ENCODE measurements at regions of chr4 and their contacts with region 1.

Region 1: DNA sequence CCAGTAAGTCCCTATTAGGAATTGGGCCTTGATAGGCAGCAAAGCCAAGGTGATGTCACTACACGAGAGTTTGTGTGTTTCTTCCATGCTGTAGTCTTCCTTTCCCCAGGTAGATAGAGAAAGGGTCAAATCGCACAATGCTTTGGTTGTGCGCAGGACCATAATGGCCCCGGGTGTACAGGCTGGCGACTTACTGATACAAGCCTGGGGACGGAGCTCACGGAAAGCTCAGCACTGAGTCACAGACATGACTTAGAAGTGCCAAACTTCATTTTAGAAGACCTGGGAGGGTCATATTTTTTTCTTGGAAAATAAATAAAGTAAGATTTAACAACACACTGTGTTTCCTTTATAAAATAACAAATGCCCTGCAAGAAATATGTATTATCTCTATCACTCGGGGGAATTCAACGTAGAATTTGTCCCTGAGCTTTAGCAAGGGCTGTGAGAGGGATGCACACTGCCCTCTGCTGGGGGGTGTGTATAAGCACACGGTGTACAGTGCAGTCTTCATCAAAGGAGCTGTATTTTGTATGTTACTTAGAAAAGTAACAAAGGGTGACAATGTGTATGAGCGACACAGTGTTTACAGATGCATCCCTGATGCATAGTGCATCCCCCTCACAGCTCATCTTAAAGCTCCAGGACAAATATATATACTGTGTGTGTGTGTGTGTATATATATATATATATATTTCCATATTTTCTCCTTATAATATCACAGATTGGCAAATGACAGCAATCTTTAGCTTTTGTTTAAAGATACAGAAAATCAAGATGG is 254.5 kb upstream of the VEGFC start:
- DNase-seq: peak; percentile 53
- ATAC-seq: peak; percentile 97
- H3K4me3 ChIP-seq: no peak overlapping the region
- H3K27ac ChIP-seq: peak overlapping the region; percentile 51; the same call in 1 of the 2 replicates
- H3K4me1 ChIP-seq: no peaks in the 10 kb centered on the region
- H3K27me3 ChIP-seq: no peaks in the 10 kb centered on the region
- CTCF ChIP-seq: peak; percentile 74

Region 2: GRCh38 chr4:176563591-176563990 is 483.7 kb before region 1 on chr4:
- CTCF ChIA-PET with region 1: interaction called, 5 read pairs
- POLR2A ChIA-PET with region 1: no interaction called
- in situ Hi-C with region 1: no loop called
- intact Hi-C with region 1: loop called (anchors 10 kb)
- DNase-seq: no peak
- ATAC-seq: no peak
- H3K4me3 ChIP-seq: no peak overlapping the region
- H3K27ac ChIP-seq: no peak overlapping the region
- H3K4me1 ChIP-seq: no peaks in the 10 kb centered on the region
- H3K27me3 ChIP-seq: no peaks in the 10 kb centered on the region
- CTCF ChIP-seq: peak; percentile 49; the same call in 1 of the 2 replicates

Region 3: GRCh38 chr4:176902710-176903323 is 144.4 kb before region 1 on chr4:
- CTCF ChIA-PET with region 1: no interaction called
- POLR2A ChIA-PET with region 1: no interaction called
- in situ Hi-C with region 1: no loop called
- intact Hi-C with region 1: loop called (anchors 10 kb)
- DNase-seq: peak; percentile 64
- ATAC-seq: peak; percentile 44; the same call in 1 of the 2 replicates
- H3K4me3 ChIP-seq: peak overlapping the region in 1 of 2 experiments; percentile 19; a peak in 2 of 4 replicates
- H3K27ac ChIP-seq: peak overlapping the region; percentile 73
- H3K4me1 ChIP-seq: peaks cover 20% of the 10 kb centered on the region; the same call in 1 of the 2 replicates
- H3K27me3 ChIP-seq: no peaks in the 10 kb centered on the region
- CTCF ChIP-seq: no peak

Measured in Panc1 (cell line).